ENCODE measurements at regions of chr17 and their contacts with region 1.

Region 1: GRCh38 chr17:12041316-12041715 is 20.6 kb downstream of the MAP2K4 start:
- DNase-seq: no peak
- H3K4me3 ChIP-seq: no peak overlapping the region
- H3K27ac ChIP-seq: no peak overlapping the region
- H3K4me1 ChIP-seq: peaks cover 0 to 11% (median 0%) of the 10 kb centered on the region in 4 donors
- H3K27me3 ChIP-seq: no peaks in the 10 kb centered on the region
- CTCF ChIP-seq: no peak
- EP300 ChIP-seq: no peak
- POLR2A ChIP-seq: no peak

Region 2: GRCh38 chr17:11031787-11032186 is 1009.5 kb before region 1 on chr17:
- in situ Hi-C with region 1: no loop called
- intact Hi-C with region 1: no loop called
- DNase-seq: no peak
- H3K4me3 ChIP-seq: no peak overlapping the region
- H3K27ac ChIP-seq: no peak overlapping the region
- H3K4me1 ChIP-seq: no peaks in the 10 kb centered on the region
- H3K27me3 ChIP-seq: no peaks in the 10 kb centered on the region
- CTCF ChIP-seq: no peak
- EP300 ChIP-seq: no peak
- POLR2A ChIP-seq: no peak

Region 3: DNA sequence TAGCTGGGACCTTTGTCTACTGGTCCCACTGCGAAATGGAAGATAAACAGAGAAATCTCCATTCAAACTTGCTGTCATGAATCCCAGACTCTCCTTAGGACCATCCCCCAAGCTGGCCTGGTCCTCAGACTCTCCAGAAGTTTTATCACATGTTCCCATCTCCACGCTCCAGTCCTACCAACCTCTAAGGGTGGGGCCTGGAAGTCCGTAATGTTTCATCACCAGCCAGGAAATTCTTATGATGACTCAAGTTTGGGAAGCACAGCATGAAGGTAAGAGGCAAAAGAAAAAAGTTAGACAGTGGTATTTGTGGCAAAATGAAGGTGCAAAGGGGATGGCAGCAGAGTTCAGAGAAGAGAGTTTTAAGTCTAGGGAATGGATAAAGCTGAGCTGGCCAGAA is 96.7 kb before region 1 on chr17:
- in situ Hi-C with region 1: no loop called
- intact Hi-C with region 1: no loop called
- DNase-seq: no peak
- H3K4me3 ChIP-seq: no peak overlapping the region
- H3K27ac ChIP-seq: no peak overlapping the region
- H3K4me1 ChIP-seq: no peaks in the 10 kb centered on the region
- H3K27me3 ChIP-seq: no peaks in the 10 kb centered on the region
- CTCF ChIP-seq: no peak
- EP300 ChIP-seq: no peak
- POLR2A ChIP-seq: no peak

Region 4: DNA sequence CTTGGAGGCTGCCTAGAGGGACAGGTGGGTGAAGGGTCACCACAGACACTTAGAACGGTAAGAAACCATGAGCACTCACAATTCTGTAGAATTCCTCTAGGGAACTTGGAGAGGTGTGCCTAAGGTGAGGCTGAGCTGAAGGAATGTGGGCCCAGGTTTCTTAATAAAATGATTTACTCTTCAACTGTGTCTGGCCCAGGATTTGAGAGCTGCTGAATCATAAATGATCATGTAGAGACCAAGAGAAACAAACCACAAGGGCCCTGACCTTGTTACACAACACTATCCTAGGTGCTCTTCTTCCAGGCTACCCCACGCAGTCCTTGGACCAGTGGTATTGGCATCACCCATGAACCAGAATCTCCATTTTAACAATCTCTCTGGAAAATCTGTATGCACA is 71.8 kb before region 1 on chr17:
- in situ Hi-C with region 1: no loop called
- intact Hi-C with region 1: no loop called
- DNase-seq: no peak
- H3K4me3 ChIP-seq: no peak overlapping the region
- H3K27ac ChIP-seq: no peak overlapping the region
- H3K4me1 ChIP-seq: no peaks in the 10 kb centered on the region
- H3K27me3 ChIP-seq: no peaks in the 10 kb centered on the region
- CTCF ChIP-seq: no peak
- EP300 ChIP-seq: no peak
- POLR2A ChIP-seq: no peak

Region 5: DNA sequence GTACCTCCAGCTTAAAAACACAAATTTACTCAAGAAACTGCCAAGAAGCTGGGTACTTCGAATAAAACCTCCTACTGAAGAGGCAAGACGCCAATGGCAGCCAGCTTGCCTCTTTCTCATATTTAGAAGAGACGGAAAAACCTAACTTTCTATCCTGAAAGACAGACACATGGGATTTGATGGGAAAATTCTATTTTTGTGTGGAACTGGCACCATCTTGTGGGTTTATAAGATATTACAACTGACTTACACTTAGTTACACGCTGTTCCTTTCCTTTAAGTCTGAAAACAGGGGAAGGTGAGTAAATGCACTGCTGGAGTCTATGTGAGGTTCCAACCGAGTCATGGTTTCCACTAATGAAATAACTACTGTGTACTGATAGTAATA is 54.4 kb before region 1 on chr17:
- in situ Hi-C with region 1: no loop called
- intact Hi-C with region 1: no loop called
- DNase-seq: no peak
- H3K4me3 ChIP-seq: no peak overlapping the region
- H3K27ac ChIP-seq: no peak overlapping the region
- H3K4me1 ChIP-seq: peaks cover 0 to 14% (median under 1%) of the 10 kb centered on the region in 4 donors
- H3K27me3 ChIP-seq: no peaks in the 10 kb centered on the region
- CTCF ChIP-seq: peak; percentile 42 to 58 (median 51)
- EP300 ChIP-seq: no peak
- POLR2A ChIP-seq: no peak

Region 6: DNA sequence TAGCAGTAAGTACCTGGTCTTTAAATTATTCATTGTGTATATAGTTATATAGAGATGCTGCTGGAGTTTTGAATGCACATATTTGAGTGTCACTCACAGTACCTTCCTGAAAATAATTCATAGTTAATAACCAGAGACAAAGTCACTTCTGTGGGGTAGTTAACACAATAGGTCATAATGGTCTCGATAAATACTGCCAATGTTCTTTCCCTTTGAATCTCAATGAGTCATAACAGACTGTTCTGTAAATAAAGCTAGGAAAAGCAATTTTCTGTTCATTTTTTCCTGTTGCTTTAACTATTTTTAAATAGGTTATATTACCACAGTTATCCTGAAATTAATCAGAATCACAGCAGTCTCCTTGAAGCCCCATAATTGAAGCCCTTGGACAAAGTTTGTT is 66.6 kb after region 1 on chr17:
- in situ Hi-C with region 1: loop called in 1 of 4 experiments (anchors 10 kb)
- intact Hi-C with region 1: no loop called
- DNase-seq: no peak
- H3K4me3 ChIP-seq: no peak overlapping the region
- H3K27ac ChIP-seq: no peak overlapping the region
- H3K4me1 ChIP-seq: peaks cover 0 to 3% (median 0%) of the 10 kb centered on the region in 4 donors
- H3K27me3 ChIP-seq: no peaks in the 10 kb centered on the region
- CTCF ChIP-seq: no peak
- EP300 ChIP-seq: no peak
- POLR2A ChIP-seq: no peak

Region 7: GRCh38 chr17:13462146-13462545 is 1420.8 kb after region 1 on chr17:
- in situ Hi-C with region 1: no loop called
- intact Hi-C with region 1: loop called (anchors 10 kb)
- DNase-seq: no peak
- H3K4me3 ChIP-seq: no peak overlapping the region
- H3K27ac ChIP-seq: no peak overlapping the region
- H3K4me1 ChIP-seq: no peaks in the 10 kb centered on the region
- H3K27me3 ChIP-seq: no peaks in the 10 kb centered on the region
- CTCF ChIP-seq: no peak
- EP300 ChIP-seq: no peak
- POLR2A ChIP-seq: no peak